ENCODE measurements at regions of chr1 and their contacts with region 1.

Region 1: DNA sequence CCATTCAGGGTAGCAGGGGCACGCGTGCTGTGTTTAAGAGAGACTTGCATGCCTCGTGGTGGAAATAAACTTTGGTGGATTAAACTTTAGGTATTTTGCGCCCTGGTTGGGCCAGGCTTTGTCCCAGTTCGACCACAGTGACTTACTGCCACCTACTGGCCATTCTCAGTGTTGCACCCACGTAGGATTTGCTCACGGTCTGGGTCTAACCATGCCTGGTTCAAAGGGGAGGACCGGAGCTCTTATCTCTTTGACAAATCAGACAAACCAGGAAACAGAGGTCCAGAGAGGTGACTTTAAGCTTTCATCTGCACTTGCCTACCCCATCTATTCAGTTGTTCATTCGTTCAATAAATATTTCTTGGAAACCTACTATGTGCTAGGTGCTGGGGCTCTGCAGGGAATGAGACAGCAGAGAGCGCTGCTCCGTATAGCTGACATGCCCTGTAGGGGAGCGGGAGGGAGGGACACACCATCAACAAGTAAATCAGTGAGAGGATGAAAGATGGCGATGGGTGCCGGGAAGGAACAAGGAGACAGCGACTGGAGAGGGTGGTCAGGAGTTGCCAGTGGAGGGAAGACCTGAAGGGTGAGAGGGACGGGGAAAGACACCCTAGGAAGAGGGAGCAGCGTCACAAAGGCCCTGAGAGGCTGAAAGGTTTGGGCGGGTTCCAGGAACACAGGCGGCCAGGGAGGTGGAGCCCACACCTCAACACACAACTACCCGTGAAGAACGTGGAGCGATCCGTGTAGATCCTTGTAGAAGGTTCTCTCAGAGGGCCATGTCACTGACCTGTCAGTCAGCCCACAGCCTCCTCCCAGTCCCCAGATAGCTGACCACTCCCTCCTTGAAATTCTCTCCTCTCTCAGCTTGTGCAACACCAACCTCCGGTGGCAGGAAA is 27.2 kb upstream of the TINAGL1 start:
- DNase-seq: peak; percentile 86 to 90
- H3K4me3 ChIP-seq: peak overlapping the region; percentile 40
- H3K4me3 Mint-ChIP-seq: peak overlapping the region; percentile 97
- H3K27ac Mint-ChIP-seq: no peak overlapping the region
- H3K4me1 ChIP-seq: peaks cover 14% of the 10 kb centered on the region
- H3K4me1 Mint-ChIP-seq: peaks cover 12% of the 10 kb centered on the region
- H3K27me3 ChIP-seq: no peaks in the 10 kb centered on the region
- H3K27me3 Mint-ChIP-seq: no peaks in the 10 kb centered on the region
- CTCF ChIP-seq: peak; percentile 53 to 75

Region 2: GRCh38 chr1:30754684-30755171 is 794.4 kb before region 1 on chr1:
- CTCF ChIA-PET with region 1: no interaction called
- POLR2A ChIA-PET with region 1: no interaction called
- intact Hi-C with region 1: no loop called
- DNase-seq: no peak
- H3K4me3 ChIP-seq: no peak overlapping the region
- H3K4me3 Mint-ChIP-seq: no peak overlapping the region
- H3K27ac Mint-ChIP-seq: no peak overlapping the region
- H3K4me1 ChIP-seq: no peaks in the 10 kb centered on the region
- H3K4me1 Mint-ChIP-seq: no peaks in the 10 kb centered on the region
- H3K27me3 ChIP-seq: no peaks in the 10 kb centered on the region
- H3K27me3 Mint-ChIP-seq: no peaks in the 10 kb centered on the region
- CTCF ChIP-seq: no peak

Region 3: GRCh38 chr1:31348449-31348848 is 200.7 kb before region 1 on chr1:
- CTCF ChIA-PET with region 1: no interaction called
- POLR2A ChIA-PET with region 1: no interaction called
- intact Hi-C with region 1: no loop called
- DNase-seq: no peak
- H3K4me3 ChIP-seq: no peak overlapping the region
- H3K4me3 Mint-ChIP-seq: no peak overlapping the region
- H3K27ac Mint-ChIP-seq: no peak overlapping the region
- H3K4me1 ChIP-seq: no peaks in the 10 kb centered on the region
- H3K4me1 Mint-ChIP-seq: no peaks in the 10 kb centered on the region
- H3K27me3 ChIP-seq: no peaks in the 10 kb centered on the region
- H3K27me3 Mint-ChIP-seq: no peaks in the 10 kb centered on the region
- CTCF ChIP-seq: no peak

Region 4: DNA sequence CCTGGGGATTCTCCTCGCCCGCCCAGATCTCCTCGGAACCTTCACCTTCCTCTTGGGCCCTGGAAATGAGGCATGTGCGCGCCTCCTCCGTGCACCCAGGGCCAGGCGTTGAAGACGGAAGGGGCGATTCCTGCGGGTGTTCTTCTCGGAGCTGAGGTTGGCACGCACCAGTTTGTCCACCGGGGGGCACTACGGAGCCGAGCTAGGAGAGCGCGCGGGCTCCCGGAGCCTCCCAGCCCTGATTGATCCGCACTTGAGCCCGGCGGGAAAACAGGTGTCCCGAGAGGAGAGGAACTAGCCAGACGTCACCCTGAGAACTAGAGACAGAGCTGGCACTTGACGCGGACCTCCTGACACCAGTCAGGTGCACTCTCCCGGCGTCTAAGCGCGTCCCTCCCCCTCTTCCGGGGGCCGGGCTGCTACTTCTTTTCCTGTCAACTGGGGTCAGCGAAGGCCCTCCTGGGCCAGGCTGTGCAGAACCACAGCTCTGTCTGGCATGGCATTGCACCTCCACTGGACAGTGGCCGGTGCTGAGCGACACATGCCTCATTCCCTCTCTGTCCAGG is 154.4 kb before region 1 on chr1:
- CTCF ChIA-PET with region 1: interaction called, 11 read pairs
- POLR2A ChIA-PET with region 1: interaction called, 3 read pairs
- intact Hi-C with region 1: loop called (anchors 2 kb)
- DNase-seq: peak; percentile 71 to 78
- H3K4me3 ChIP-seq: no peak overlapping the region
- H3K4me3 Mint-ChIP-seq: peak overlapping the region; percentile 63
- H3K27ac Mint-ChIP-seq: no peak overlapping the region
- H3K4me1 ChIP-seq: peaks cover 32% of the 10 kb centered on the region
- H3K4me1 Mint-ChIP-seq: peaks cover 14% of the 10 kb centered on the region
- H3K27me3 ChIP-seq: no peaks in the 10 kb centered on the region
- H3K27me3 Mint-ChIP-seq: no peaks in the 10 kb centered on the region
- CTCF ChIP-seq: peak; percentile 32 to 58

Region 5: DNA sequence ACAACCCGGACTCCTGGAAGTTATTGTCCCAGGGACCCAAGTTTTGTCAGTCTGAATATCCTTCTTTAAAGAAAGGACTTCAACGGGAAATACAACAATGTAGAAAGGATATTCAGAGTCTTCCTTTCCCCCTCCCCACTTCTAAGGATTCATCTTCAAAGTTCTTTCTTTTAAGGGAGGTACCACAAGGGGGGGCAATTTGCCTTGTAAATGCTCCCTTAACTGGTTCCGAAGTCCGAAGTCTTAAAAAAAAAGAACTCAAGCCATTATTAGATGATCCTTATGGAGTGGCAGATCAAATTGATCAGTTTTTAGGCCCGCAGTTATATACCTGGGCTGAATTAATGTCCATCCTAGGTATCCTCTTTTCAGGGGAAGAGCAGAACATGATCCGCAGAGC is 89.1 kb before region 1 on chr1:
- CTCF ChIA-PET with region 1: interaction called, 10 read pairs
- POLR2A ChIA-PET with region 1: no interaction called
- intact Hi-C with region 1: loop called (anchors 1 kb)
- DNase-seq: peak in 1 of 2 experiments; percentile 13
- H3K4me3 ChIP-seq: no peak overlapping the region
- H3K4me3 Mint-ChIP-seq: no peak overlapping the region
- H3K27ac Mint-ChIP-seq: no peak overlapping the region
- H3K4me1 ChIP-seq: no peaks in the 10 kb centered on the region
- H3K4me1 Mint-ChIP-seq: no peaks in the 10 kb centered on the region
- H3K27me3 ChIP-seq: no peaks in the 10 kb centered on the region
- H3K27me3 Mint-ChIP-seq: no peaks in the 10 kb centered on the region
- CTCF ChIP-seq: peak; percentile 2 to 27

Region 6: GRCh38 chr1:31564134-31564989 is 15.2 kb after region 1 on chr1:
- CTCF ChIA-PET with region 1: interaction called, 10 read pairs
- POLR2A ChIA-PET with region 1: no interaction called
- intact Hi-C with region 1: no loop called
- DNase-seq: peak; percentile 63 to 76
- H3K4me3 ChIP-seq: no peak overlapping the region
- H3K4me3 Mint-ChIP-seq: no peak overlapping the region
- H3K27ac Mint-ChIP-seq: peak overlapping the region; percentile 95
- H3K4me1 ChIP-seq: peaks cover 28% of the 10 kb centered on the region
- H3K4me1 Mint-ChIP-seq: peaks cover 19% of the 10 kb centered on the region
- H3K27me3 ChIP-seq: no peaks in the 10 kb centered on the region
- H3K27me3 Mint-ChIP-seq: no peaks in the 10 kb centered on the region
- CTCF ChIP-seq: peak; percentile 51 to 62

Measured in Caco-2 (cell line).